Cardiac septum (tissue), 1 donor: ENCODE measurements at regions of chr1 and their contacts with region 1.

Region 1: GRCh38 chr1:155208541-155209311 is at the start of gene MTX1:
- DNase-seq: peak; percentile 94
- total RNA-seq, gene MTX1: 16.4 TPM

Region 2: DNA sequence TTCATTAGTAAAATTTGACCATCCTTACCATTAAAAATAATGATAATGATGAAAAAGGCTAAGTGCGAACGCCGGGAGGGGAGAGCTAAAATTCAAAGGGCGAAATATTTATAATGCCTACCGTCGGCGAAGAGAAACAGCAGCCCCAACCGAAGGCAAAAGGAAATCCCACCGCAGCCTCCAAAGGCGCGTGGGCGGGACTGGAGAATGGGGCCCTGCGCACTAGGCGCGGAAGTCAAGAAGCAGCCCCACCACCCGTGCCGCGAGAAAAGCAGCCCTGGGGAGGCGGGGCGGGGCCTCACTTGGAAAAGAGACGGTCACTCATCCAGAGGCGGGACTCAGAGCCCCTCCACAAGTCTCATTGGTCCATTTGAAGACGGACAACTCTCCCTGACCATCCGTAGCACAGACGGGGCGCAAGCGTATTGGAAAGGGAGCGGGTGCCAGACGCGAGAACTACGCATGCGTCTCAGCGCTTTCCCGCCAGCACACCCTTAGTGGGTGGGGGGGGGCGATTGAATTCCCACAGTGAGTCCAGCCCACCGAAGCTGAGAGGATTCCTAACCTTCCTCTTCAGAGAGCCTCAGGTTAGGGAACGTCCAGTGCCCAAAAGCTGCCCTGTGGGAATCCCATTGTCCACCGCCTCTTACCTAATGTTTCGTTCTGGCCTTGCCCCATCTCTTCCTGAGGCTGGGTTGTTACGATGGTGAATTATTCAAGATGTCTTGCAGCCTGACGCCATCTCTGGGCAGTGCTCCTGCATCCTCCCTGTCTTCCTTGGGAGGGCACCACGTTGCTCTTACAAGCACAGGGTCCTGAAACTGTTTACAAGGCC is 18.8 kb after region 1 on chr1:
- intact Hi-C with region 1: loop called (anchors 2 kb)
- DNase-seq: peak; percentile 98

Region 3: GRCh38 chr1:155244368-155245162 is 35.8 kb after region 1 on chr1:
- intact Hi-C with region 1: loop called (anchors 2 kb)
- DNase-seq: peak; percentile 98

Region 4: DNA sequence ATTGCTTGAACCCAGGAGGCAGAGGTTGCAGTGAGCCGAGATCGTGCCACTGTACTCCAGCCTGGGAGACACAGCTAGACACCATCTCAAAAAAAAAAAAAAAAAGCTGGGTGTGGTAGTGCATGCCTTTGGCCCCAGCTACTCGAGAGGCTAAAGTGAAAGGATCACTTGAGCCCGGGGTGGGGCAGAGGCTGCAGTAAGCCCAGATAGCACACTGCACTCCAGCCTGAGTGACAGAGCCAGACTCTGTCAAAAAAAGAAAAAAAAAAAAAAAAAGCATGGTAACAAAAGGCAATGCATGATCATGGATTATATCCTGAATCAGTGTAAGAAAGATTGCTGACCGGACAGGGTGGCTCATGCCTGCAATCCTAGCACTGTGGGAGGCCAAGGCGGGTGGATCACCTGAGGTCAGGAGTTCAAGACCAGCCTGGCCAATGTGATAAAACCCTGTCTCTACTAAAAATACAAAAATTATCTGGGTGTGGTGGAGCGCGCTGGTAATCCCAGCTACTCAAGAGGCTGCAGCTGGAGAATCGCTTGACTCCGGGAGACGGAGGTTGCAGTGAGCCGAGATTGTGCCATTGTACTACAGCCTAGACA is 188.2 kb after region 1 on chr1:
- intact Hi-C with region 1: no loop called
- DNase-seq: no peak

Region 5: GRCh38 chr1:155591770-155592169 is 383.0 kb after region 1 on chr1:
- intact Hi-C with region 1: loop called (anchors 2 kb)
- DNase-seq: no peak

Region 6: GRCh38 chr1:155776404-155776803 is 567.7 kb after region 1 on chr1:
- intact Hi-C with region 1: no loop called
- DNase-seq: no peak